ENCODE measurements at regions of chr9 and their contacts with region 1.

Region 1: DNA sequence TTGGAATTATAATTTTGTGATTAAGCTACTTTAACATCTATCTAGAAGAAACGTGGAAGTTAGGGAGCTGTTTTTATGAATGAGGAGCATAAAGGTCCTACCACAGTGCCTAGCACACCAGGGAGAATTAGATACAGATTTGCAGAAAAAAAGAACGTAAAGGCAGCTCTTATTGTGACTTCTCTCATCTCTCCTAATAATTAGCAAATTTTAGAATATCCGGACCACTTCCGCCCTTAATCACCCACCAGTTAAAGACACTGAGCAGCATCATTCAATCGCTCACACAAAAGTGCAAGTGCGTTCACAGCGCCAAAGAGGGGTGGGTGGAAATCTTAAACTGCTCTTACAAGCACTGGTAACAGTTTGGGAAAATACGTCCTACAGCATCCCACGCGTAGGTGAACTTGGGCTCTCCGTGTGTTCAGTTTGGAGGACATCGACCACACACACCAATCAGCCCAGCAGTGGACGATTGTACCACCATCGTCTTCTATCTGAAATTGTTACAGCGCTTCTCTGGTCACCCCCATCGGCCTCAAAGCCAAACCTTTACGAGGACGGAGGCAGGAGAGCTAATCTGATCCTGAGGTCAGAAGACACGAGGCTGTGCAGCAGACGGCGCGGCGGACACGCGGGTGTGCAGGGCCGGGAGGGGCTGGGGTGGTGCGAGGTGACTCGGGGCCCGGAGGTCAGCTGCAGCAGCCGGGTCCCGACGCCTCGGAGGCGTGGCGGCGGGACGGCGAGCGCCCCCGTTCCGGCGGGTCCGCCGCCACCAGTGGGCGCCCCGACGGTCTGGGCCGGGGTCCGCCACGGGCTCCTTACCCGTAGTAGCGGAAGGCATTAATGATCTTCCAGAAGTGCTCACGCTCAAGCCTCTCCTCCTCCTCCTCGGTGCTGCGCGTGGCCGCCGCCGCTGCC is 646 bp downstream of the CARNMT1 start:
- DNase-seq: peak in 8 of 9 donors; percentile 27 to 66 (median 35)
- ATAC-seq: peak; percentile 18
- H3K4me3 ChIP-seq: peak overlapping the region; percentile 69
- H3K4me3 Mint-ChIP-seq: peak overlapping the region; percentile 80 to 98 (median 96)
- H3K27ac ChIP-seq: peak overlapping the region; percentile 90
- H3K27ac Mint-ChIP-seq: peak overlapping the region; percentile 84 to 98 (median 95)
- H3K4me1 ChIP-seq: peaks cover 34 to 42% of the 10 kb centered on the region in 2 donors
- H3K4me1 Mint-ChIP-seq: peaks cover 30 to 54% (median 48%) of the 10 kb centered on the region in 7 donors
- H3K27me3 ChIP-seq: no peaks in the 10 kb centered on the region
- H3K27me3 Mint-ChIP-seq: peaks cover 0 to 3% (median 0%) of the 10 kb centered on the region in 5 donors

Region 2: GRCh38 chr9:73154760-73155159 is 1872.7 kb before region 1 on chr9:
- CTCF ChIA-PET with region 1: no interaction called
- POLR2A ChIA-PET with region 1: no interaction called
- intact Hi-C with region 1: loop called (anchors 5 to 10 kb)
- DNase-seq: peak in 7 of 9 donors; percentile 36 to 68 (median 54)
- ATAC-seq: peak; percentile 52
- H3K4me3 ChIP-seq: peak overlapping the region; percentile 67
- H3K4me3 Mint-ChIP-seq: peak overlapping the region; percentile 81 to 98 (median 90)
- H3K27ac ChIP-seq: peak overlapping the region; percentile 77
- H3K27ac Mint-ChIP-seq: peak overlapping the region; percentile 86 to 97 (median 96)
- H3K4me1 ChIP-seq: peaks cover 37 to 54% of the 10 kb centered on the region in 2 donors
- H3K4me1 Mint-ChIP-seq: peaks cover 47 to 96% (median 79%) of the 10 kb centered on the region in 7 donors
- H3K27me3 ChIP-seq: no peaks in the 10 kb centered on the region
- H3K27me3 Mint-ChIP-seq: peaks cover 0 to 2% (median 0%) of the 10 kb centered on the region in 5 donors

Region 3: GRCh38 chr9:74666625-74667316 is 360.7 kb before region 1 on chr9:
- CTCF ChIA-PET with region 1: no interaction called
- POLR2A ChIA-PET with region 1: no interaction called
- intact Hi-C with region 1: no loop called
- DNase-seq: no peak
- ATAC-seq: no peak
- H3K4me3 ChIP-seq: no peak overlapping the region
- H3K4me3 Mint-ChIP-seq: no peak overlapping the region
- H3K27ac ChIP-seq: no peak overlapping the region
- H3K27ac Mint-ChIP-seq: no peak overlapping the region
- H3K4me1 ChIP-seq: no peaks in the 10 kb centered on the region
- H3K4me1 Mint-ChIP-seq: no peaks in the 10 kb centered on the region
- H3K27me3 ChIP-seq: no peaks in the 10 kb centered on the region
- H3K27me3 Mint-ChIP-seq: peaks cover 3 to 17% (median 6%) of the 10 kb centered on the region in 5 donors

Region 4: GRCh38 chr9:75001719-75002422 is 25.6 kb before region 1 on chr9:
- CTCF ChIA-PET with region 1: interaction called, 4 read pairs
- POLR2A ChIA-PET with region 1: no interaction called
- intact Hi-C with region 1: loop called in 1 of 2 experiments (anchors 2 kb)
- DNase-seq: peak in 7 of 9 donors; percentile 52 to 77 (median 68)
- ATAC-seq: peak; percentile 98
- H3K4me3 ChIP-seq: no peak overlapping the region
- H3K4me3 Mint-ChIP-seq: no peak overlapping the region
- H3K27ac ChIP-seq: no peak overlapping the region
- H3K27ac Mint-ChIP-seq: no peak overlapping the region
- H3K4me1 ChIP-seq: peaks cover 0 to 4% of the 10 kb centered on the region in 2 donors
- H3K4me1 Mint-ChIP-seq: peaks cover 0 to 8% (median 5%) of the 10 kb centered on the region in 7 donors
- H3K27me3 ChIP-seq: no peaks in the 10 kb centered on the region
- H3K27me3 Mint-ChIP-seq: no peaks in the 10 kb centered on the region

Region 5: GRCh38 chr9:75046725-75047345 is 19.4 kb after region 1 on chr9:
- CTCF ChIA-PET with region 1: no interaction called
- POLR2A ChIA-PET with region 1: no interaction called
- intact Hi-C with region 1: no loop called
- DNase-seq: no peak
- ATAC-seq: no peak
- H3K4me3 ChIP-seq: no peak overlapping the region
- H3K4me3 Mint-ChIP-seq: no peak overlapping the region
- H3K27ac ChIP-seq: no peak overlapping the region
- H3K27ac Mint-ChIP-seq: no peak overlapping the region
- H3K4me1 ChIP-seq: no peaks in the 10 kb centered on the region
- H3K4me1 Mint-ChIP-seq: no peaks in the 10 kb centered on the region
- H3K27me3 ChIP-seq: no peaks in the 10 kb centered on the region
- H3K27me3 Mint-ChIP-seq: peaks cover 0 to 8% (median 0%) of the 10 kb centered on the region in 5 donors

Region 6: GRCh38 chr9:75071530-75072124 is 44.2 kb after region 1 on chr9:
- CTCF ChIA-PET with region 1: interaction called, 3 read pairs
- POLR2A ChIA-PET with region 1: interaction called, 3 read pairs
- intact Hi-C with region 1: loop called in 1 of 2 experiments (anchors 1 kb)
- DNase-seq: peak in 7 of 9 donors; percentile 20 to 75 (median 35)
- ATAC-seq: peak; percentile 79
- H3K4me3 ChIP-seq: no peak overlapping the region
- H3K4me3 Mint-ChIP-seq: peak overlapping the region in 1 of 10 donors; percentile 13
- H3K27ac ChIP-seq: peak overlapping the region; percentile 25
- H3K27ac Mint-ChIP-seq: peak overlapping the region; percentile 26 to 96 (median 79)
- H3K4me1 ChIP-seq: peaks cover 8 to 10% of the 10 kb centered on the region in 2 donors
- H3K4me1 Mint-ChIP-seq: peaks cover 14 to 35% (median 21%) of the 10 kb centered on the region in 7 donors
- H3K27me3 ChIP-seq: no peaks in the 10 kb centered on the region
- H3K27me3 Mint-ChIP-seq: no peaks in the 10 kb centered on the region

Region 7: GRCh38 chr9:75185585-75186170 is 158.2 kb after region 1 on chr9:
- CTCF ChIA-PET with region 1: no interaction called
- POLR2A ChIA-PET with region 1: no interaction called
- intact Hi-C with region 1: loop called in 1 of 2 experiments (anchors 5 kb)
- DNase-seq: peak in 7 of 9 donors; percentile 10 to 38 (median 25)
- ATAC-seq: peak; percentile 74
- H3K4me3 ChIP-seq: no peak overlapping the region
- H3K4me3 Mint-ChIP-seq: peak overlapping the region in 3 of 10 donors; percentile 20 to 36 (median 25)
- H3K27ac ChIP-seq: no peak overlapping the region
- H3K27ac Mint-ChIP-seq: peak overlapping the region in 2 of 9 donors; percentile 30 to 81
- H3K4me1 ChIP-seq: peaks cover 12 to 13% of the 10 kb centered on the region in 2 donors
- H3K4me1 Mint-ChIP-seq: peaks cover 8 to 32% (median 28%) of the 10 kb centered on the region in 7 donors
- H3K27me3 ChIP-seq: no peaks in the 10 kb centered on the region
- H3K27me3 Mint-ChIP-seq: no peaks in the 10 kb centered on the region